ENCODE measurements at regions of chr1 and their contacts with region 1.

Region 1: DNA sequence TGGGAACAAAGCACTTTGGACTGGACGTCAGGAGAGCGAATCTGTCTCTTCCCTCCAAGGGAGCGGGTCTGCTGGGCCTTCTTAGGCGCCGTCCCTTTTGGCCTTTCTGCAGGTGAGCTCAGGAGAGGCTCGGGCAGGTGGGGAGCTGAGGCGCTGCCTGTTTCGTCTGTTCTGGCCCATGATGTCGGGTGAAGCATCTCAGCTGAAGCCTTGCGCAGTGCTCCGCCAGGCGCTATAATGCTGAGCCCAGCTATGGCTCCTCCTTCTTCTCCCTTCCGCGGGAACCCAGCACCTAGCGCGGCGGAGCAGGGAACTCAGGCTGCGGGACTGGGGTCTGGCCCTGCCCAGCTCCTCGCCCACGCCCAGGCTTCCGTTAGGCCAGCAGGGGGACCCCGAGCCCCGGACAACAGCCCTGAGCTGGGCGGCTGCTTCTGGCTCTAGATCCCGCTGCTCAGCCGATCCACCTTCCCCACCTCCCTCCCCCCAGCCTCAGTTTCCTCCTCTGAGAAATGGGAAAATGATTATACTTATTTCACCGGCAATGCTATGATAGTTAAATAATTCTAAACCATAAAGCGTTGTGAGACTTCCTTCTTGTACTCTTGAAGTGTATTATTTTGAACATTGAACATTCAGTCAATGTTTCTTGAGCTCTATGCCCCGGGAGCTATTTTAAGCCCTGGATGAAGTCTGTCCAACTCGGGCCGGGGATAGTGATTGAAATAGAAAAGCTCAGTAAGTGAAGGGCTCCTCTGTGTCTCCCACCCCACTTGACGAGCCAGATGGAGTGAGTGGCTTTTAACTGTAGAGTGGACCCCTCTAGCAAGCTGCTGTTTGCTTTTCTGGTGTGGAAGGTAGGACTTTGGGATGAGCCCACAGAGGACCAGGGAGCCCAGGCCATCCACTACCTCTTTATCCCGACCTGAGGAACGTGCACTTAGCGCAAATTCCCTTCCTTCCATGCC is 9.6 kb upstream of the ADORA1 start:
- DNase-seq: peak; percentile 63 to 93
- ATAC-seq: peak; percentile 91 to 99
- H3K4me3 ChIP-seq: no peak overlapping the region
- H3K27ac ChIP-seq: no peak overlapping the region
- H3K4me1 ChIP-seq: 0 out of 3 replicates have a peak, but pooled peaks cover 4% of the 10 kb centered on the region
- CTCF ChIP-seq: peak; percentile 81
- EP300 ChIP-seq: no peak
- POLR2A ChIP-seq: no peak
- RAD21 ChIP-seq: peak; percentile 87 to 94

Region 2: GRCh38 chr1:203101915-203102634 is 15.8 kb before region 1 on chr1:
- CTCF ChIA-PET with region 1: interaction called, 20 read pairs
- POLR2A ChIA-PET with region 1: no interaction called
- DNase-seq: no peak
- ATAC-seq: no peak
- H3K4me3 ChIP-seq: no peak overlapping the region
- H3K27ac ChIP-seq: no peak overlapping the region
- H3K4me1 ChIP-seq: no peaks in the 10 kb centered on the region
- CTCF ChIP-seq: no peak
- EP300 ChIP-seq: no peak
- POLR2A ChIP-seq: no peak
- RAD21 ChIP-seq: no peak

Region 3: DNA sequence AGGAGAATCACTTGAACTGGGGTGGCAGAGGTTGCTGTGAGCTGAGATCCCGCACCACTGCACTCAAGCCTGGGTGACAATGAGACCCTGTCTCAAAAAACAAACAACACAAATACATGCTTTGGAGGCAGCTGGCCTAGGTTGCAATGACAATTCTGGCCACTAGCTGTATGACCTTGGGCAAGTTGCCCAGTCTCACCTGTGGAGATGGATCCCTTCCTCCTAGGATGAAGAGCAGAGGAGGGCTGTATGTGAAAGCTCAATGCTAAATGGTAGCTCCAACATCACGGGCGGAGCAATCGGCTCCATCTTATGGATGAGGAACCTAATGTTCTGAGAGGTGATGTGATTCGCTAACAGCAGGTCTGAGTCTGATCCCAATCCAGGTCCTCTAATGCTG is 30.2 kb after region 1 on chr1:
- CTCF ChIA-PET with region 1: interaction called, 16 read pairs
- POLR2A ChIA-PET with region 1: no interaction called
- DNase-seq: peak in 1 of 2 experiments; percentile 38
- ATAC-seq: peak in 1 of 2 experiments; percentile 48; a peak in 3 of 6 replicates
- H3K4me3 ChIP-seq: no peak overlapping the region
- H3K27ac ChIP-seq: no peak overlapping the region
- H3K4me1 ChIP-seq: peaks cover 13% of the 10 kb centered on the region
- CTCF ChIP-seq: 0 out of 3 replicates have a peak, but pooled peaks have one; percentile 5
- EP300 ChIP-seq: no peak
- POLR2A ChIP-seq: no peak
- RAD21 ChIP-seq: no peak

Region 4: GRCh38 chr1:203166566-203166940 is 48.7 kb after region 1 on chr1:
- CTCF ChIA-PET with region 1: interaction called, 99 read pairs
- POLR2A ChIA-PET with region 1: no interaction called
- DNase-seq: peak in 1 of 2 experiments; percentile 15
- ATAC-seq: peak; percentile 38 to 84; a peak in 4 of 6 replicates
- H3K4me3 ChIP-seq: no peak overlapping the region
- H3K27ac ChIP-seq: no peak overlapping the region
- H3K4me1 ChIP-seq: no peaks in the 10 kb centered on the region
- CTCF ChIP-seq: peak; percentile 26; the same call in 1 of the 3 replicates
- EP300 ChIP-seq: no peak
- POLR2A ChIP-seq: no peak
- RAD21 ChIP-seq: peak in 1 of 2 experiments; percentile 16; a peak in 1 of 5 replicates

Region 5: GRCh38 chr1:203177470-203178039 is 59.7 kb after region 1 on chr1:
- CTCF ChIA-PET with region 1: interaction called, 99 read pairs
- POLR2A ChIA-PET with region 1: no interaction called
- DNase-seq: peak; percentile 29 to 43
- ATAC-seq: peak; percentile 60 to 63
- H3K4me3 ChIP-seq: no peak overlapping the region
- H3K27ac ChIP-seq: peak overlapping the region; percentile 76 to 81
- H3K4me1 ChIP-seq: peaks cover 32% of the 10 kb centered on the region
- CTCF ChIP-seq: no peak
- EP300 ChIP-seq: no peak
- POLR2A ChIP-seq: no peak
- RAD21 ChIP-seq: no peak

Region 6: GRCh38 chr1:203202431-203203245 is 84.7 kb after region 1 on chr1:
- CTCF ChIA-PET with region 1: interaction called, 40 read pairs
- POLR2A ChIA-PET with region 1: no interaction called
- DNase-seq: no peak
- ATAC-seq: no peak
- H3K4me3 ChIP-seq: no peak overlapping the region
- H3K27ac ChIP-seq: no peak overlapping the region
- H3K4me1 ChIP-seq: peaks cover 5% of the 10 kb centered on the region; the same call in 1 of the 3 replicates
- CTCF ChIP-seq: no peak
- EP300 ChIP-seq: no peak
- POLR2A ChIP-seq: no peak
- RAD21 ChIP-seq: no peak